Activated CD4-positive, alpha-beta T cell treated with anti-CD3 and anti-CD28 coated beads for 36 hours (primary cell): ENCODE measurements at regions of chr19 and their contacts with region 1.

Region 1: GRCh38 chr19:1064661-1065605 is 2.0 kb upstream of the ARHGAP45 start:
- DNase-seq: peak; percentile 86
- ATAC-seq: peak; percentile 48
- H3K4me3 Mint-ChIP-seq: no peak overlapping the region
- H3K27ac Mint-ChIP-seq: no peak overlapping the region
- H3K4me1 Mint-ChIP-seq: peaks cover 33% of the 10 kb centered on the region
- H3K27me3 Mint-ChIP-seq: no peaks in the 10 kb centered on the region

Region 2: DNA sequence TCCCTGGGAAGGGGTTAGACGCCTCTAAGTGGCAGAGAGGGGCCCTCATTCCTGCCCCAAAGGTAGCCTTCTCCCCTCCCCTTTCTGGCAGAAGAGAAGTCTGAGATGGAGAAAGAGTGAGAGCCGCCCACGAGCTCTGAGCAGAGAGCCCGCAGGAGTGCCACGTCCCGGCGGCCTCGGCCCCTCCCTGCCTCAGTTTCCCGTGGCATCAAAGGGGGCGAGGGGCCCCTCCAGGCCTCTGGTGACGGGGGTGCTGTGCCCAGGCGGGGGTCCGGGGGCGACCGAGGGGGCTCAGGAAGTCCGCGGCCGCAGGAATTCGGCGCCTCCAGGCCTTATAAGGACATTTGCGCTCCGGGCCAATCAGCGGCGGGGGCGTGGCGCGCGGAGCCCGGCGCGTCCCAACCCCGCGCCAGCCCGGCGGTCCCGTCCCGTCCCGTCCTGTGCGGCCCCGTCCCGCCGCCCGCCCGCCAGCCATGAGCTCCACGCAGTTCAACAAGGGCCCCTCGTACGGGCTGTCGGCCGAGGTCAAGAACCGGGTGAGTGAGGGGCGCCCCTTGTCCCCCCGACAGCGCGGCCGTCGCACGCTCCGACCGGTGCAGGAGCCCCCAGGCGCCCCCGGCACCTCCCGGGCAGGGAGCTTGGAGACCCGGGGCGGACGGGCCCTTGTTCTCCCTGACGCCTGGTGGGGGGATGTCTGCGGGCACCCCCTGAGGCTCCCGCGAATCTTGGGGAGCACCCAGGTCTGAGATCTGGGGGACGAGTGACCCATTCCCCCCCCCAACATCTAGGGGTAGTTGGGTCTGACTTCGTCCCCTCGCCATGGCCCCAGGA is 38.5 kb before region 1 on chr19 and contains the start of gene CNN2:
- CTCF ChIA-PET with region 1: interaction called, 5 read pairs
- POLR2A ChIA-PET with region 1: interaction called, 4 read pairs
- intact Hi-C with region 1: loop called (anchors 2 to 5 kb)
- DNase-seq: peak; percentile 83
- ATAC-seq: peak; percentile 58
- H3K4me3 Mint-ChIP-seq: peak within 1 kb of the TSS; percentile 88
- H3K27ac Mint-ChIP-seq: peak within 1 kb of the TSS; percentile 87
- H3K4me1 Mint-ChIP-seq: peaks cover 31% of the 10 kb centered on the region
- H3K27me3 Mint-ChIP-seq: no peaks in the 10 kb centered on the region
- total RNA-seq, gene CNN2: 108 to 130 TPM

Region 3: DNA sequence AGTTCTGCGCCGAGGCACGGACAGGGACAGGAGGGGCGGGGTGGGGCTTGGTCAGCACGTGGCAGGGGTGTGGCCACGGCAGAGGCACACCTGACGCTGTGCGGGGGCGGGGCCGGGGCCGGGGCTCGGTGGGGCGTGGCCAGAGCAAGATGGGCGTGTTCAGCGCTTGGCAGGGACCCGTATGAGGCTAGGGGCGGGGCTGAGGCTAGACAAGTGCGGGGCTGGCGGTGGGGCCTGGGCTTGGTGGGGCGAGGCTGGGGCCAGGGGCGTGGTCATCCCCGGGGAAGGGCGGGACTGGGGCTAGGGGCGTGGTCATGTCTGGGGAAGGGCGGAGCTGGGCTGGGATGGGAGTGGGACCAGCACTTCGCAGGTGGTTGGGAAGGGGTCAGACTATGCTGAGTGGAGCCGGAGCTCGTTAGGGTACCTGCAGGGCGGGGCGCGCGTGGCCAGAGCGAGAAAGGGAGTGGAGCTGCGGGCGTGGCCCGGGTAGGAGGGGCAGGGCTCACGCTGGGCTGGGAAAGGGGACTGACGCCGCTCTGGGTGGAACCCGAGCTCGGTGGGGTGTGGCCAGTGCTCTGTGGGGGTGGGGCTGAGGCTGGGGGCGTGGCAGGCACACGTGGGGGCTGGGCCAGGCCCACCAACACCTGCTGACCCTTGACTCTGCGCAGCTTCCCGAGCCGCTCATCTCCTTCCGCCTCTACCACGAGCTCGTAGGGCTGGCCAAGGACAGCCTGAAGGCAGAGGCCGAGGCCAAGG is 17.4 kb after region 1 on chr19:
- CTCF ChIA-PET with region 1: interaction called, 26 read pairs
- POLR2A ChIA-PET with region 1: interaction called, 4 read pairs
- intact Hi-C with region 1: loop called (anchors 1 kb)
- DNase-seq: peak; percentile 96
- ATAC-seq: peak; percentile 71
- H3K4me3 Mint-ChIP-seq: no peak overlapping the region
- H3K27ac Mint-ChIP-seq: no peak overlapping the region
- H3K4me1 Mint-ChIP-seq: peaks cover 60% of the 10 kb centered on the region
- H3K27me3 Mint-ChIP-seq: no peaks in the 10 kb centered on the region

Region 4: DNA sequence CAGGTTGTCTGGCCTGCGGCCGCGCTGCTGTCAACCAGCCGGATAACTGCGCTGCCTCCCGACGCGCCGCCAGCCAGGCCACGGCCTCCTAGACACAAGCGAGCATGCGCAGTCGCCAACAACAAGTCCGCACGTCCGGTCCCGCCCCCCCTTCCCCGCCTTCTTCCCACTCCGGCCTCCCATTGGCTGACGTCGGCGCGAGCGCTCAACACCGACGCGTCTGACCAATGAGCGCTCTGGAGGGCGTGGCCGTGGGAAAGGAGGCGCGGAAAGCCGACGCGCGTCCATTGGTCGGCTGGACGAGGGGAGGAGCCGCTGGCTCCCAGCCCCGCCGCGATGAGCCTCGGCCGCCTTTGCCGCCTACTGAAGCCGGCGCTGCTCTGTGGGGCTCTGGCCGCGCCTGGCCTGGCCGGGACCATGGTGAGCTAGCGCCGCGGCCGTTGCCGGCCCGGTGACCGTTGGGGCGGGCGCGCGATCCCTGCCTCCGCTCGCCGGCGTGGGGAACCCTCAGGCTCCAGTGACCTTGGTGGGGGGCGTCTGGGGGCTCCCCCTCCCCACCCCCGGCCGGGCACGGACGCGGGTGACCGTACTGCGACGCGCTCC is 38.9 kb after region 1 on chr19 and contains the start of gene GPX4:
- CTCF ChIA-PET with region 1: interaction called, 3 read pairs
- POLR2A ChIA-PET with region 1: no interaction called
- intact Hi-C with region 1: loop called (anchors 1 to 5 kb)
- DNase-seq: peak; percentile 100
- ATAC-seq: peak; percentile 81
- H3K4me3 Mint-ChIP-seq: peak within 1 kb of the TSS; percentile 71
- H3K27ac Mint-ChIP-seq: peak within 1 kb of the TSS; percentile 83
- H3K4me1 Mint-ChIP-seq: peaks cover 52% of the 10 kb centered on the region
- H3K27me3 Mint-ChIP-seq: no peaks in the 10 kb centered on the region
- total RNA-seq, gene GPX4: 192 to 218 TPM

Region 5: GRCh38 chr19:1470203-1471009 is 405.5 kb after region 1 on chr19:
- CTCF ChIA-PET with region 1: no interaction called
- POLR2A ChIA-PET with region 1: no interaction called
- intact Hi-C with region 1: no loop called
- DNase-seq: peak; percentile 83
- ATAC-seq: peak; percentile 67
- H3K4me3 Mint-ChIP-seq: peak overlapping the region; percentile 54
- H3K27ac Mint-ChIP-seq: no peak overlapping the region
- H3K4me1 Mint-ChIP-seq: peaks cover 5% of the 10 kb centered on the region
- H3K27me3 Mint-ChIP-seq: peaks cover 3% of the 10 kb centered on the region

Region 6: DNA sequence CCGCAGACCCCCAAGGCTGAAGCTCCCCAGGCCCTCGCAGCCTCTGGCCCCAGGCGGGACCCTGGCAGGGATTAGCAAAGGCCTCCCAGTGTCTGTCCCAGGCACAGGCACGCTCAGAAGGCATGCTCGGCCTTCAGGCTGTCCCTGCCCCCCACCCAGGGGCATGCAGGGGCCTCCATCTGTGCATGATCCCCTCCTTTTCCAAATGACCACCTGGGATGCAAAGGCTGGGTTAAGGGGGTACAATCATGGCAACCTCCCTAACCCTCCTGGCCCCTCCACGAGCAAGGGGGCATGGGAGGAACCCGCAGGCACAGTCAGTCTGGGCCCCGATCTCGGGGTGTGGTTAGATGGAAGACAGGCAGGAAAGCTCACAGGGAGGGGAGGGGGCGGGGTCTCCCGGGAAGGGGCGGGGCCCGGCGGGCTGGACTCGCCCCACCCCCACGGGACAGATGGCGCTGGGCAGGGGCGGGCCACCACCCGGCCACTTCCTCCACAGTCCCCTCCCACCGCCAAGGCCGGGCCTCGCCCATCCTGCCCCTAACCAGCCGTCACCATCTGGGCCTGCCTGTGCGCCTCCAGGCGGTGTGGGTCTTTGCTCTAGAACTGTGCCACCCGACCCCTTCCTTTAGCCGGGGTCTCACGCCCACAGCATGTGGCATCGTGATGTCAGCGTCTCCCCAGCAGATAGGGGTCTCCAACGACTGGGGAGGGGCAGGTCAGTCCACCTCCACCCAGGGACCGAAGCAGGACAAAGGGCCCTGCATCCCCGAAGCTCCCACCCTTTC is 790.3 kb after region 1 on chr19:
- CTCF ChIA-PET with region 1: no interaction called
- POLR2A ChIA-PET with region 1: no interaction called
- intact Hi-C with region 1: loop called in 1 of 2 experiments (anchors 10 kb)
- DNase-seq: peak; percentile 95
- ATAC-seq: peak; percentile 82
- H3K4me3 Mint-ChIP-seq: peak overlapping the region; percentile 78
- H3K27ac Mint-ChIP-seq: peak overlapping the region; percentile 86
- H3K4me1 Mint-ChIP-seq: peaks cover 64% of the 10 kb centered on the region
- H3K27me3 Mint-ChIP-seq: no peaks in the 10 kb centered on the region